ENCODE measurements at regions of chr5 and their contacts with region 1.

Region 1: DNA sequence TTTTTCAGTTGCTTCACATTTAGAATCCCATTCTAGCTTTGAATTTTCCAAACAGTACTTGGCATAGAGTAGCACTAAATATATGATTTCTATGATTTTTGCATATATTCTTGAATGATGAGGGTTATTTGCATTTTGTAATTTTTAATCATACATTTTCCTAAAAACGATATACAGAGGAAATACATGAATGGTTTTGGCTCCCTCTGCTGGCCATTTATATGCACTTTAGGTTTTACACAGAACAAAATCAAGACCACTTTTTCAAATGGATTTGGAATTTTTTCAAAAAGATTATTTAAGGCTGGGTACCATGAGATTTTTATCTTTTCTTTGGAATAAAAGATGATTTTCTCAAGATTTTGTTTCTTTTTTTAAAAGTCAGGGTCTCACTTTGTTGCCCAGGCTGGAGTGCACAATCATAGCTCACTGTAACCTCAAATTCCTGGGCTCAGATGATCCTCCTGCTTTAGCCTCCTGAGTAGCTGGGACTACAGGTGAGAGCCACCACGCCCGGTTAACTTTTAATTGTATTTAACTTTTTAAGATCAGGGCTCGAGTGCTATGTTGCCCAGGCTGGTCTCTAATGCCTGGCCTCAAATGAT is 16.7 kb upstream of the COMMD10 start:
- DNase-seq: peak; percentile 66

Region 2: GRCh38 chr5:115888027-115888426 is 180.1 kb before region 1 on chr5:
- in situ Hi-C with region 1: loop called (anchors 25 kb)
- DNase-seq: peak; percentile 23

Region 3: DNA sequence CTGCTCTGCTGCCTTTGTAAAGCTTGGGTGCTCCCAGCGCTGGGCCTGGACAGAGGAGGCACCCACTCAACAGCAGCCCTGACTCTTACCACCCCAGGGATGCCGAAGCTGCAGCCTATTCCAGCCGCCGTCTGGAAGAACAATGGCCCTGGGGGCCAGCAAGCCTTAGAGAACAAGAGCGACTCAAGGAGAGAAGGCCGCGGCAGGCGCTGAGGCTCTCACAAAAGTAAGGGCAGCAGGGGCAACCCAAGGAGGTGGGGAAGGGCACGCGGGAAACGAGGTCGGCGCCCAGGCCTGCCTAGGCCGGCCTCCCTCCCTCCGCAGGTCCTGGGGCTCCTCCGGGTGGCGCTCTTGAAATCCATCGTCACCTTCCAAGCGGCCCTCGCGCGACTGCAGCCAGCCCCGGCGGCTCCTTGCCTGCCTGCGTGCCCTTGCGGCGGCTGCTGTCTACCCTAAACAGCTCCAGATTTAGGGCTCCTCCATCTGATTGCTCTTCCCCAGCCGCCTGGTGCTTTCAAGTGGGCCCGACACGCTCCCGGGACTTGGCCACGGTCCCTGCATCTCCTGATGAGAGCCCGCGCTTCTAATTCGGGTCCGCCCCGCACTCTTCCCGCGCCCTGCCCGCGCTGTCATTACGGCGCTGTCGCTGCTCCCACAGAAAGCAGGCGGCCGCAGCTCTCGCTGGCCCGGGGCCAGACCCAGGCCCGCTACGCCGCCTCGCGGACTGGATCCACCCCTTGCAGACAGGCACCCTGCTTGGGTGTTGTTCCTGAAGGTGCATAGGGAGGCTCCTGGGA is 293.2 kb after region 1 on chr5:
- in situ Hi-C with region 1: no loop called
- DNase-seq: no peak

Measured in KBM-7 (cell line).